ENCODE measurements at regions of chr2 and their contacts with region 1.

Region 1: DNA sequence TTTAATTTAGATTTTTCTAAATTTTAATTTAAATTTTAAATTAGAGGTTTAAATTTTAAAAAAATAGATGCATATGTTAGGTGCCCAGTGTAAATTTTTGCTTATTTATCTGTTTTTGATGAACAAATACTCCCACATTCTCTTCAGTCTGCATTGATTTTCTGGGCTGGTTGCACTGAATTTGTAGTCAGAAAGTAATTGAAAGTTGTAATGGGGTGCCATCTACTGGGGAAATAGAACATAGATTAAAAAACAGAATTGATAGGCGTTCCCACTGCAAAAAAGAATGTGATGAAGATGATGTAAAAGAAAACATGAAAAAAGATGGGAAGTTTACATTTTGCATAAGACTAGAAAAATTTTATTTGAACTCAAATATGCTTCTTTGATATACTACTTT is 51.7 kb upstream of the CCDC85A start:
- DNase-seq: peak; percentile 25 to 65 (median 34)
- ATAC-seq: no peak
- H3K4me3 ChIP-seq: no peak overlapping the region
- H3K27ac ChIP-seq: no peak overlapping the region
- H3K4me1 ChIP-seq: peaks cover 5 to 26% of the 10 kb centered on the region in 2 experiments; a peak in 4 of 5 replicates
- H3K27me3 ChIP-seq: no peaks in the 10 kb centered on the region
- CTCF ChIP-seq: peak; percentile 28 to 68 (median 45); a peak in 4 of 6 replicates
- EP300 ChIP-seq: no peak
- POLR2A ChIP-seq: no peak
- RAD21 ChIP-seq: peak; percentile 68 to 74

Region 2: DNA sequence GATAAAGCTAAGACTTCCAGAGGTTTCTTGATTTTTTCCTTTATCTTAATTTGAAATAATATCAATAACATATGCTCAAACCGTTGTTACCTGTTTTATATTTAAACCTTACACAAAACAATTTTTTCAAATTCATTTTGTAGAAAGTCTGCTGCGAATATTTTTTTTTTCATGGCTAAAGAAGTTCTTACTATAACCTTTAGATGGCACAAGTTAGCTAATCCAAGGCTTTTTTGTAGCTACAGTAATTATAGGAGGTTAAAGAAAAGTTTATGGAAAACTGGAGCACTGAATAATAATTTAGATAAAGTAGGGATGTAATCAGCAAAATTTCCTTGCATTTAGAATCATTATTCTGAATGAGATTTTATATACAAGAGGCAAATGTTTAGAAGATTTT is 360.5 kb before region 1 on chr2:
- CTCF ChIA-PET with region 1: no interaction called
- POLR2A ChIA-PET with region 1: no interaction called
- in situ Hi-C with region 1: no loop called
- intact Hi-C with region 1: loop called (anchors 5 kb)
- DNase-seq: peak in 2 of 4 experiments; percentile 11 to 13
- ATAC-seq: no peak
- H3K4me3 ChIP-seq: no peak overlapping the region
- H3K27ac ChIP-seq: no peak overlapping the region
- H3K4me1 ChIP-seq: no peaks in the 10 kb centered on the region
- H3K27me3 ChIP-seq: peaks cover 0 to 3% of the 10 kb centered on the region in 2 experiments; a peak in 1 of 5 replicates
- CTCF ChIP-seq: peak in 2 of 3 experiments; percentile 33 to 68; a peak in 3 of 6 replicates
- EP300 ChIP-seq: no peak
- POLR2A ChIP-seq: no peak
- RAD21 ChIP-seq: peak; percentile 85 to 88

Region 3: GRCh38 chr2:55923091-55923981 is 208.8 kb before region 1 on chr2 and contains the start of gene EFEMP1:
- CTCF ChIA-PET with region 1: no interaction called
- POLR2A ChIA-PET with region 1: no interaction called
- in situ Hi-C with region 1: no loop called
- intact Hi-C with region 1: no loop called
- DNase-seq: no peak
- ATAC-seq: peak; percentile 78
- H3K4me3 ChIP-seq: no peak within 1 kb of the TSS
- H3K27ac ChIP-seq: no peak within 1 kb of the TSS
- H3K4me1 ChIP-seq: peaks cover 3 to 10% of the 10 kb centered on the region in 2 experiments; a peak in 3 of 5 replicates
- H3K27me3 ChIP-seq: peaks cover 4 to 15% of the 10 kb centered on the region in 2 experiments; a peak in 2 of 5 replicates
- CTCF ChIP-seq: no peak
- EP300 ChIP-seq: no peak
- POLR2A ChIP-seq: no peak
- RAD21 ChIP-seq: no peak
- polyA plus RNA-seq, gene EFEMP1: 0.15 to 0.22 TPM

Region 4: DNA sequence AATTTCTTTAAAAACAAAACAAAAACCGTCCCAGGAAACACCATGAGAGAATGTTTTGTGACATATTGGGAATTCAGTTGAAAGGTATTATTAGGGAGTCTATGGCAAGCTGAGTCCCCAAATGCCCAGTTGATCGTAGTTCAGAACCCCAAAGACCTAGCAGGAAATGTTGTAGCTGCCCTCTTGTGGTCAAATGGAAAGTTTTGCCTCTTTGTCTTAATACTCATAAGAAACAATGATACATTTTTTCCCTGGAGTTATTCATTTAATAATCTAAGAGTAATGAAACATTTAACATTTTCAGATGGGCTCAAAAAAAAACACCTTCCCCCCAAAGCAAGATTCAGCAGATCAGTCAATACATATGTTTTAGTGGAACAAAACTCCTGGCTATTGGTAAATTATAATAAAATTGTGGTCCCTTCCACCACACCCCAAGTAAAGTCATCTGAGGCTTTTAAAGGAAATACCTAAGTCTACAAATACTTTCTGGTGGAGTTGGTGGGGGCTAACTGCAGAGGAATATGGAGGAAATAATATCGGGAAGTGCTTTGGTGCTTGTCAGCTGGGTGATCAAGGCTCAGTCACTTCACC is 170.7 kb before region 1 on chr2:
- CTCF ChIA-PET with region 1: no interaction called
- POLR2A ChIA-PET with region 1: no interaction called
- in situ Hi-C with region 1: no loop called
- intact Hi-C with region 1: loop called (anchors 10 kb)
- DNase-seq: peak; percentile 31 to 48 (median 40)
- ATAC-seq: peak; percentile 76
- H3K4me3 ChIP-seq: no peak overlapping the region
- H3K27ac ChIP-seq: no peak overlapping the region
- H3K4me1 ChIP-seq: no peaks in the 10 kb centered on the region; a peak in 1 of 5 replicates
- H3K27me3 ChIP-seq: no peaks in the 10 kb centered on the region; a peak in 1 of 5 replicates
- CTCF ChIP-seq: peak; percentile 37 to 69 (median 52); a peak in 5 of 6 replicates
- EP300 ChIP-seq: no peak
- POLR2A ChIP-seq: no peak
- RAD21 ChIP-seq: peak; percentile 69 to 77

Region 5: DNA sequence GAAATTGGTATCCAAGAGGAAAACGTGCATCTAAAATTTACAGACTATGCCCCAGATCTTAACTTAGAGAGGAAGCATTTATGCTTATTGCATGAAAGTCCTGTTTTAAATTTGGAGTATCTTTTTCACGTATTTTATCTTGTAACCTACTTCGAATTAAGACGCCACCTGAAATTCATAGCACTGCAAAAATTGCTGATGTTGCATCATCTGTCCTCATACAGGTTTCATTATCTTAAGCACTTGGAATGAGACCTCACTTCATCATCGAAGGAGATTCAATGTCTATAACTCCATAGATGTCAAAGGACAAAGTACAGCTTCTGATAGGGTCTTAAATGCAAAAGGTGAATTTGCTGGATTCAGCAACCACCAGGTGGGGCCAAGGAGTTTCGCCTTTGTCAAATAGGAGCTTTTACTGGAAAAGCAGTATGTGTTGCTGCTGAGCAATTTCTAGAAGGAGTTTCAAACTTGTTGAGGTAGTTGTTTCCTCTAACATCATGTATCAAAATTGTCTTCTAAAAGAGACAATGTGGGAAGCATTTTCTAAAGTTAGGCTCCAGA is 54.7 kb before region 1 on chr2:
- CTCF ChIA-PET with region 1: interaction called, 18 read pairs
- POLR2A ChIA-PET with region 1: no interaction called
- in situ Hi-C with region 1: no loop called
- intact Hi-C with region 1: loop called (anchors 1 kb)
- DNase-seq: peak in 3 of 4 experiments; percentile 12 to 53 (median 32)
- ATAC-seq: peak; percentile 77
- H3K4me3 ChIP-seq: no peak overlapping the region
- H3K27ac ChIP-seq: no peak overlapping the region
- H3K4me1 ChIP-seq: no peaks in the 10 kb centered on the region
- H3K27me3 ChIP-seq: no peaks in the 10 kb centered on the region; a peak in 2 of 5 replicates
- CTCF ChIP-seq: peak; percentile 56 to 69 (median 66); a peak in 5 of 6 replicates
- EP300 ChIP-seq: no peak
- POLR2A ChIP-seq: no peak
- RAD21 ChIP-seq: peak; percentile 63 to 68

Region 6: GRCh38 chr2:56147501-56147900 is 15.4 kb after region 1 on chr2:
- CTCF ChIA-PET with region 1: no interaction called
- POLR2A ChIA-PET with region 1: interaction called, 8 read pairs
- in situ Hi-C with region 1: no loop called
- intact Hi-C with region 1: loop called (anchors 1 kb)
- DNase-seq: no peak
- ATAC-seq: no peak; the same call in 2 of the 3 replicates
- H3K4me3 ChIP-seq: no peak overlapping the region
- H3K27ac ChIP-seq: no peak overlapping the region
- H3K4me1 ChIP-seq: peaks cover 3 to 17% of the 10 kb centered on the region in 2 experiments; a peak in 3 of 5 replicates
- H3K27me3 ChIP-seq: no peaks in the 10 kb centered on the region
- CTCF ChIP-seq: no peak
- EP300 ChIP-seq: no peak
- POLR2A ChIP-seq: no peak
- RAD21 ChIP-seq: no peak

Region 7: DNA sequence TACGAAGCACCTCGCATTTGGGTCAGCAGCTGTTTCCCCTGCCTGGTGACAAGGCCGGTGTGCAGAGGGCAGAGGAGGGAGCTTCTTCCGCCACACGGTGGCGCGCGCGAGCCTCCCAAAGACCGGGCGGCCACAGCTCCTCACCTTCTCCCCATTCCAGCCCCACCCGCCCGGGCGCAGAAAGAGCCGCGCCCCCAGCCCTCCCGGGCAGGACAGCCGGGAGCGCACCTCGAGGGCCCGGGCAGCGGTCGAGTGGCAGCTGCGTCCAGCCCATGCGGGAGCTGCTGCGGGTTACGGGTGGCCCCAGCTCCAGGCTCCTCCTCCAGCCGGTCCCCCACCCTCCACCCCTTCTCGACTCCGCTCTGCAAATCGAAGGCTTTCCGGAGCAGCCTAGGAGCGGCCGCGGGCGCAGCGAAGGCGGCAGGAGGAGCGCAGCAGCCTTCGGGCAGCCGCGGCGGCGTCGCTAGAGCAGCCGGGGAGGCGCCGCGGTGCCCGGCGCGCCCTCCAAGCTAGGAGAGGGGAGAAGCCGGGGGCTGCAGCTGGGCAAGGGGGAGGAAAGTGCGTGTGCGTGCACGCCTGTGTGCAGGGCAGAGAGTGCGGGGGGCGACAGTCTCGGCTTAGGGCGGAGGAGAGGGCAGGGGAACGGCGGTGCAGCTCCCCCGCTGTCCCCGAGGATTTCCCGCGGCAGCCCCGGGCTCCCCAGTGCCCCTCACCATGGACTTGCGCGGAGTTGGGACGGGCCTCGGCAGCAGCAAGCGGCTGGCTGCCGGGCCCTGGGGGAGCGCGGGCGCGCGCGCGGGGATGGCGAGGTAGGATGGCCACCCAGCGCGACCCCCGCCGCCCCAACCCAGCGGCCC is 51.7 kb after region 1 on chr2 and contains the start of gene CCDC85A:
- CTCF ChIA-PET with region 1: no interaction called
- POLR2A ChIA-PET with region 1: no interaction called
- in situ Hi-C with region 1: no loop called
- intact Hi-C with region 1: loop called (anchors 1 kb)
- DNase-seq: peak; percentile 85 to 90 (median 88)
- ATAC-seq: peak; percentile 99
- H3K4me3 ChIP-seq: peak within 1 kb of the TSS; percentile 41
- H3K27ac ChIP-seq: no peak within 1 kb of the TSS
- H3K4me1 ChIP-seq: peaks cover 0 to 14% of the 10 kb centered on the region in 2 experiments; a peak in 3 of 5 replicates
- H3K27me3 ChIP-seq: peaks cover 11 to 20% of the 10 kb centered on the region in 2 experiments; a peak in 3 of 5 replicates
- CTCF ChIP-seq: peak; percentile 79 to 83 (median 79)
- EP300 ChIP-seq: no peak
- POLR2A ChIP-seq: no peak
- RAD21 ChIP-seq: peak; percentile 67 to 79
- polyA plus RNA-seq, gene CCDC85A: not detected

Region 8: GRCh38 chr2:57516698-57517340 is 1384.7 kb after region 1 on chr2:
- CTCF ChIA-PET with region 1: no interaction called
- POLR2A ChIA-PET with region 1: no interaction called
- in situ Hi-C with region 1: no loop called
- intact Hi-C with region 1: loop called (anchors 2 kb)
- DNase-seq: peak; percentile 24 to 37 (median 33)
- ATAC-seq: peak; percentile 74
- H3K4me3 ChIP-seq: no peak overlapping the region
- H3K27ac ChIP-seq: no peak overlapping the region
- H3K4me1 ChIP-seq: no peaks in the 10 kb centered on the region
- H3K27me3 ChIP-seq: no peaks in the 10 kb centered on the region
- CTCF ChIP-seq: peak in 2 of 3 experiments; percentile 40 to 69; a peak in 3 of 6 replicates
- EP300 ChIP-seq: no peak
- POLR2A ChIP-seq: no peak
- RAD21 ChIP-seq: peak; percentile 58 to 77

Measured in K562 (cell line).